MCF 10A (cell line): ENCODE measurements at regions of chr13 and their contacts with region 1.

Region 1: DNA sequence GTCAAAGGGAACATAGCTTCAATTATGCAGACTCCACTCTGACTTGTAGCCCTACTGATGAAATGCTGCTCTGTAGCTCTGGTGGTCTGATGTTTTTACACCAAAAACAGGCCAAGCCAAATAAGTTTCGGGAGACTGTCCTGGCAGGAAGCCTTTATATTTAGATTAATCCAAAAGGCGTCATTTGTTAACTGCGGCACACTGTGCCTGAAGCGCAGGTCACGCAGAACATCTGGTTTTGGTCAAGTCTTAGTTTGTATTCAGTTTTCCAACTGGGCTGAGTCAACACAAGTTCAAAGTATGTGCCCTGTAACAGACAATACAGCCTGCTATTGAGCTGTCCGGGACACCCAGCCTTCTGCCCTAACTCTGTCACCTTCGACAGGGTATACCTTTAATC is 154.6 kb upstream of the IPO5 start:
- DNase-seq: no peak
- H3K4me3 Mint-ChIP-seq: peak overlapping the region; percentile 38
- H3K27ac Mint-ChIP-seq: peak overlapping the region; percentile 76
- H3K4me1 Mint-ChIP-seq: peaks cover 26% of the 10 kb centered on the region
- H3K27me3 Mint-ChIP-seq: no peaks in the 10 kb centered on the region
- CTCF ChIP-seq: no peak

Region 2: DNA sequence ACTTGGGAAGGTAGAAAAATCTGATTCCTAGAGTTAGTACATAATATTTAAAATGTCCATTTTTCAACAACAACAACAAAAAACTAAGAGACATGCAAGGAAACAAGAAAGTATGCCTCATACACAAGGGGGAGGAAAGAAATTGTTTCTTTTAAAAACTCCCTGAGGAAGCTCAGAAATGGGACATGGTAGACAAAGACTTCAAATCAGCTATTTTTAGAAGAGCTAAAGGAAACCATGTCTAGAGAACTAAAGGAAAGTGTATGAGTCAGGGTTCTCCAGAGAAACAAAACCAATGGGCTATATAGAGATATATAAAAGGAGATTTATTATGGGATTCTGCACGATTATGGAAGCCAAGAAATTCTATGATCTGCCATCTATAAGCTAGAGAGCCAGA is 36.7 kb before region 1 on chr13:
- CTCF ChIA-PET with region 1: interaction called, 14 read pairs
- POLR2A ChIA-PET with region 1: no interaction called
- intact Hi-C with region 1: no loop called
- DNase-seq: no peak
- H3K4me3 Mint-ChIP-seq: no peak overlapping the region
- H3K27ac Mint-ChIP-seq: no peak overlapping the region
- H3K4me1 Mint-ChIP-seq: peaks cover 8% of the 10 kb centered on the region
- H3K27me3 Mint-ChIP-seq: no peaks in the 10 kb centered on the region
- CTCF ChIP-seq: no peak

Region 3: GRCh38 chr13:97781891-97782305 is 16.9 kb before region 1 on chr13:
- CTCF ChIA-PET with region 1: interaction called, 25 read pairs
- POLR2A ChIA-PET with region 1: interaction called, 12 read pairs
- intact Hi-C with region 1: no loop called
- DNase-seq: peak; percentile 84
- H3K4me3 Mint-ChIP-seq: no peak overlapping the region
- H3K27ac Mint-ChIP-seq: peak overlapping the region; percentile 83
- H3K4me1 Mint-ChIP-seq: peaks cover 39% of the 10 kb centered on the region
- H3K27me3 Mint-ChIP-seq: no peaks in the 10 kb centered on the region
- CTCF ChIP-seq: no peak

Region 4: GRCh38 chr13:97810152-97810551 is 11.3 kb after region 1 on chr13:
- CTCF ChIA-PET with region 1: interaction called, 10 read pairs
- POLR2A ChIA-PET with region 1: interaction called, 5 read pairs
- intact Hi-C with region 1: no loop called
- DNase-seq: peak; percentile 48
- H3K4me3 Mint-ChIP-seq: no peak overlapping the region
- H3K27ac Mint-ChIP-seq: no peak overlapping the region
- H3K4me1 Mint-ChIP-seq: peaks cover 9% of the 10 kb centered on the region
- H3K27me3 Mint-ChIP-seq: peaks cover 25% of the 10 kb centered on the region
- CTCF ChIP-seq: peak; percentile 54